Activated T-helper 2 cell treated with anti-CD3 and anti-CD28 coated beads, Interferon-gamma antibody, Interleukin-2, Interleukin-4, amounts not matched to agents 10 μg/mL and 5 μg/mL and 100 μg/mL, durations not matched to agents 14 hours and 24 hours and 36 hours (primary cell): ENCODE measurements at regions of chr18 and their contacts with region 1.

Region 1: GRCh38 chr18:59823596-59824195 is 76.1 kb upstream of the PMAIP1 start:
- DNase-seq: peak; percentile 24
- H3K4me3 Mint-ChIP-seq: no peak overlapping the region
- H3K27ac Mint-ChIP-seq: no peak overlapping the region
- H3K4me1 Mint-ChIP-seq: no peaks in the 10 kb centered on the region
- H3K27me3 Mint-ChIP-seq: peaks cover 14% of the 10 kb centered on the region

Region 2: GRCh38 chr18:59459369-59460079 is 364.2 kb before region 1 on chr18:
- intact Hi-C with region 1: loop called (anchors 1 kb)
- DNase-seq: no peak
- H3K4me3 Mint-ChIP-seq: no peak overlapping the region
- H3K27ac Mint-ChIP-seq: no peak overlapping the region
- H3K4me1 Mint-ChIP-seq: no peaks in the 10 kb centered on the region
- H3K27me3 Mint-ChIP-seq: peaks cover 4% of the 10 kb centered on the region

Region 3: DNA sequence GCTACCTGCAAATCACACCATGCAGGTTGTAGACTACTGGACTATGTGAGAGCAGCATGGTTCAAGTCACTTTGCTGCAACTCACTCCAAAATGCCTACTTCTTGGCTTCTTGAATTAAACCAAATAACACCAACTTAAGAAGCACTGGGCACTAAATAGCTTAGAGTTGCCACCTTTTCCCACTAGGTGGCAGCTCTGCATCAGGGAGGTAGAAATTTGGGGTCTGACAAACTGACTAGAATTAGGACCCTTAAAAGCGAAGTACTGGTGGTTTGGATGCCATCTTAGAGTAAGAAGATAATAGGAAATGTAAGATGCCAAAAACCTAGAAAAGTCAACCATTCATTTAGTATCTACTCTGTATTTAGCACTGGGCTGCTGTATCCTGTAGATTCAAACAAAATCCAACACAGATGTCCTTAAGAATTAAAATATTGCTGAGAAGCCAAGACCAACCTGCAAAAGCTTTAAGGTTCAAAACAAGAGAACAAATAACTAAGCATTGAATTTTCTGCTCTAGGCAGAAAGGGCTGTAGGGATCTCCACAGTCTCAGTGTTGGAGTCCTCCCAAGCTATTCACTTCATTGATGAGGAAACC is 192.0 kb before region 1 on chr18:
- intact Hi-C with region 1: loop called (anchors 5 kb)
- DNase-seq: no peak
- H3K4me3 Mint-ChIP-seq: no peak overlapping the region
- H3K27ac Mint-ChIP-seq: no peak overlapping the region
- H3K4me1 Mint-ChIP-seq: no peaks in the 10 kb centered on the region
- H3K27me3 Mint-ChIP-seq: peaks cover 6% of the 10 kb centered on the region

Region 4: DNA sequence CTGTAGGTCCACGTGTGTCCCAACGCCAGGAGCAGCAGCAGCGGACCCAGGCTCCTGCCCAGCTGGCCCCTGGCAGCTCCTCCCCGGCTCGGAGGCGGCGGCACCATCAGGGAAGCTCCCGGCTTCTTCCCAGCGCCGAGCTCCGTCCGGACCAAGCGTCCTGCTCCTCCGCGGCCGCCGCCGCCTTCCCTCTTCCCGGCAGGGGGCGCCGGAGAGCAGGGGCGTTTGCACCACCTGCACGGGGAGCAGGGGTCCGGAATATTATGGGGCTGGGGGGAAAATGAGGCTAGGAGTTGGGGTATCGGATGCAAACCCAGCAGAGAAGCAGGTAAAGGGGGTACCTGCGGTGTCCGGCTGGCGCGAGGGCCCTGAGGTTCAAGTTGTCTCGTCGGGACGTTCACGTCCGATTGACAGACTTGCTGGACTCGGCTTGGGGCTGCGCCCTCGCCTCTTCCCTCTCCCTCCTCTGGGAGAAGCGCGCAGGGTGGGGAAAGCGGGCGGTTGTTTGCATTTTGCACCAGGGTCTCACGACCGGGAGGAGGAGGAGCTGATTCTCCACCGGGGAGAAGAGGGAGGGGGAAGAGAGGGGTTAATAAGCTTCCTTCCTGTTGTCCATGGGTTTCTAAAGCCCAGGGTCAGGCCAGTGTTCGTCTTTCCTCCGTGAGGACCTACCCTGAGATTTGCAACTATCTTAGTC is 126.3 kb before region 1 on chr18 and contains the start of gene CCBE1:
- intact Hi-C with region 1: loop called (anchors 5 kb)
- DNase-seq: peak; percentile 23
- H3K4me3 Mint-ChIP-seq: no peak within 1 kb of the TSS
- H3K27ac Mint-ChIP-seq: no peak within 1 kb of the TSS
- H3K4me1 Mint-ChIP-seq: peaks cover 4% of the 10 kb centered on the region
- H3K27me3 Mint-ChIP-seq: peaks cover 62% of the 10 kb centered on the region
- total RNA-seq, gene CCBE1: not detected in 2 replicates

Region 5: GRCh38 chr18:59783138-59783537 is 40.6 kb before region 1 on chr18:
- intact Hi-C with region 1: loop called (anchors 1 kb)
- DNase-seq: no peak
- H3K4me3 Mint-ChIP-seq: no peak overlapping the region
- H3K27ac Mint-ChIP-seq: no peak overlapping the region
- H3K4me1 Mint-ChIP-seq: no peaks in the 10 kb centered on the region
- H3K27me3 Mint-ChIP-seq: peaks cover 16% of the 10 kb centered on the region

Region 6: GRCh38 chr18:59802031-59802430 is 21.7 kb before region 1 on chr18:
- intact Hi-C with region 1: no loop called
- DNase-seq: no peak
- H3K4me3 Mint-ChIP-seq: no peak overlapping the region
- H3K27ac Mint-ChIP-seq: no peak overlapping the region
- H3K4me1 Mint-ChIP-seq: peaks cover 12% of the 10 kb centered on the region
- H3K27me3 Mint-ChIP-seq: peaks cover 4% of the 10 kb centered on the region